ENCODE measurements at regions of chr3 and their contacts with region 1.

Region 1: DNA sequence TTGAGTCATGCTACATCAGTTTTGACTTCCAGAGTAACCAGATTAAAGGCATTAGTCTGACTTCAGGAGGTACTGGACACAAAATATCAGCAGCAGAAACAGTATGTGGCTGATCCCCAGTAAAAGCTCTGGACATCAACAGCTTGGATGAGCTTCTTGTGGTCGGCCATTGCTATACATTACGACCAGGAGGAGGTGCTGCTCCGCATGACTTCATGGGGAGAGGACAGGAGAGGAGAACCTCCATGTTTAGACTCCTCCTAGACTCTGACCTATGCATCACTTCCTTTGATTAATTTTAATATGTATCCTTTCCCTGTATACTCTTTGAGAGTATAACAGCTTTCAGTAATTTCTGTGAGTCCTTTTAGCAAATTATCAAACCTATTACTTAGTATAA is 285.6 kb upstream of the ARHGEF26 start:
- DNase-seq: peak; percentile 10
- CTCF ChIP-seq: no peak

Region 2: GRCh38 chr3:153848702-153849101 is 13.2 kb after region 1 on chr3:
- CTCF ChIA-PET with region 1: interaction called, 17 read pairs
- POLR2A ChIA-PET with region 1: no interaction called
- DNase-seq: no peak
- CTCF ChIP-seq: no peak

Measured in GM10248 (cell line).